Activated CD4-positive, alpha-beta T cell treated with anti-CD3 and anti-CD28 coated beads for 36 hours (primary cell): ENCODE measurements at regions of chr18 and their contacts with region 1.

Region 1: GRCh38 chr18:45690975-45691815 is 32.8 kb upstream of the SLC14A1 start:
- DNase-seq: peak; percentile 87
- ATAC-seq: peak; percentile 17
- H3K4me3 Mint-ChIP-seq: no peak overlapping the region
- H3K27ac Mint-ChIP-seq: no peak overlapping the region
- H3K4me1 Mint-ChIP-seq: peaks cover 42% of the 10 kb centered on the region
- H3K27me3 Mint-ChIP-seq: peaks cover 7% of the 10 kb centered on the region

Region 2: DNA sequence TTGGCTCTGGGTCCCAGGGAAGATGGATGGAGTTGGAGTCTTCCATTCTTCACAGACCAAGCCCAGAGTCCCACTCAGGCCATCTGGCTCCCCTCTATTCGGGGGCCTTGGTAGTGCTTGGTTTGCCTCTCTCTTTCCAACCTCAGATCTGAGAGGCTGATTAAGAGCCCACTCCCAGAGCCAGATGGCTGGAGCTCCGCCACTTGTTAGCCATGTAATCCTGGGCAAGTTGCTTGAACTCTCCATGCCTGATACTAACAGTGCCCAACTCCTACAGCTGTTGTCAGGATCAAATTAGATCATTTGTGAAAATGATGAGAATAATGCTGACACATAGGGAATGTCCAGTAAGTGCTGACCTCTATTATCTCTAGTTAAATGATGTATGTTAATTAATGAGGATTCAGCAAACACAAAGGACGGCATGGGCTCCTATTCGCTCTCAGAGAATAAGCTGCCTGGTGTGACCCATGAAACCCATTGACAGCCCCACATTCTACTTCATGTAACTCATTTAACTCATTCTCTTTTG is 13.9 kb before region 1 on chr18:
- CTCF ChIA-PET with region 1: interaction called, 14 read pairs
- POLR2A ChIA-PET with region 1: no interaction called
- intact Hi-C with region 1: no loop called
- DNase-seq: no peak
- ATAC-seq: no peak
- H3K4me3 Mint-ChIP-seq: no peak overlapping the region
- H3K27ac Mint-ChIP-seq: no peak overlapping the region
- H3K4me1 Mint-ChIP-seq: no peaks in the 10 kb centered on the region
- H3K27me3 Mint-ChIP-seq: peaks cover 7% of the 10 kb centered on the region

Region 3: DNA sequence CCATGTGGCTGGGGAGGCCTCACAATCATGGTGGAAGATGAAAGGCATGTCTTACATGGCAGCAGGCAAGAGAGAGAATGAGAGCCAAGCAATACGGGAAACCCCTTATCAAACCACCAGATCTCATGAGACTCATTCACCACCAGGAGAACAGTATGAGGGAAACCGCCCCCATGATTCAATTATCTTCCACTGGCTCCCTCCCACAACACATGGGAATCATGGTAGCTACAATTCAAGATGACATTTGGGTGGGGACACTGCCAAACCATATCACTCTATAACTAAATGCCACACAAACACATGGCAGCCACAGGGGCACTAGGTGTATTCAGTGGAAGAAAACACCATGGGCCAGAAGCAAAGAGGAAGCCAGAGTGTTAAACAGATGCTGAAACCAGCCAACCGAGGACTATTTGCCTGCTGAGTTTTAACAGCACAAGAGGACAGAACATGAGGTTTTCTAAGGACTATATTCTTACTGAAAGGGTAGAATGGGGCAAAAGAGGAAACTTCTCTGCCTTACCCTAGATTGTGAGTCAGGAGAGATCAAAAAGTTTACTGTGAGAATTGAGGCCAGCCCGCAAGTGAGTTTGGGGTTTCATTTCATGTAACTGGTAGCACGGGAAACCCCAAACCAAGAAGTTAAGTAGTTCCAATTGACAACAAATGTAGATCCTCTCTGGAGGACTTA is 183.4 kb after region 1 on chr18:
- CTCF ChIA-PET with region 1: interaction called, 33 read pairs
- POLR2A ChIA-PET with region 1: no interaction called
- intact Hi-C with region 1: loop called (anchors 2 kb)
- DNase-seq: peak; percentile 84
- ATAC-seq: peak; percentile 91
- H3K4me3 Mint-ChIP-seq: peak overlapping the region; percentile 41
- H3K27ac Mint-ChIP-seq: peak overlapping the region; percentile 96
- H3K4me1 Mint-ChIP-seq: peaks cover 34% of the 10 kb centered on the region
- H3K27me3 Mint-ChIP-seq: no peaks in the 10 kb centered on the region

Region 4: DNA sequence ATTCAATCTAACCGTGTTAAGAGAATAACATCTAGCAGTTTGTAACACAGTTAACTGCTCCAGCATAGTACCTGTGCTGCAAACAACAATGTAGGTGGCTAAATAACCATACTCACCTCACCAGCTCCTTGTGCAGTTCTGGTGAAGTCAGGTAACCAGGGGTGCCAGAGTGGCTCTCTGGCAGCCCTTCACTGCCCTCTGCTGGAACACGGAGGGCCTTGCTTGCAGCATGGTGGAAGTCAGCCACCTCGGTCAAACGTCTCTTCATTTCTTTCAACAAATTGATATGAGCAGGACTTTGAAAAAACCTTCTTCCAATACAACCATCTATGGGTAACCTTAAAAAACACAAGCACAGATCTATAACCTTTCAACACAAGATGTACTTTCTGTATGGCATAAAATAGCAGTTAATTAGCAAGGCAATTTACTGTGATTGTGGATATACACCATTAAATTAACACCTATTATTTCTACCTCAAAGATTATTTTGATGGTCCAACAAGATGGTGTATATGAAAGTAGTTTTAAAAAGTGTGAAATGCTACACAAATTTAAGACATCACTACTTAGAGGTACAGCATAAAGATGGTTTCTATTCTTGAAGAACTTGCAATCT is 219.3 kb after region 1 on chr18:
- CTCF ChIA-PET with region 1: interaction called, 3 read pairs
- POLR2A ChIA-PET with region 1: no interaction called
- intact Hi-C with region 1: loop called in 1 of 2 experiments (anchors 1 kb)
- DNase-seq: peak; percentile 81
- ATAC-seq: peak; percentile 89
- H3K4me3 Mint-ChIP-seq: no peak overlapping the region
- H3K27ac Mint-ChIP-seq: no peak overlapping the region
- H3K4me1 Mint-ChIP-seq: no peaks in the 10 kb centered on the region
- H3K27me3 Mint-ChIP-seq: no peaks in the 10 kb centered on the region

Region 5: GRCh38 chr18:45974088-45974536 is 282.9 kb after region 1 on chr18:
- CTCF ChIA-PET with region 1: no interaction called
- POLR2A ChIA-PET with region 1: no interaction called
- intact Hi-C with region 1: loop called (anchors 1 to 2 kb)
- DNase-seq: peak; percentile 83
- ATAC-seq: peak; percentile 90
- H3K4me3 Mint-ChIP-seq: no peak overlapping the region
- H3K27ac Mint-ChIP-seq: peak overlapping the region; percentile 89
- H3K4me1 Mint-ChIP-seq: peaks cover 11% of the 10 kb centered on the region
- H3K27me3 Mint-ChIP-seq: no peaks in the 10 kb centered on the region